PC-9 (cell line): ENCODE measurements at regions of chr10 and their contacts with region 1.

Region 1: GRCh38 chr10:4241724-4242345 is 456.8 kb upstream of the KLF6 start:
- DNase-seq: peak in 1 of 2 experiments; percentile 27
- H3K4me3 ChIP-seq: no peak overlapping the region
- H3K27ac ChIP-seq: no peak overlapping the region
- H3K4me1 ChIP-seq: peaks cover 22% of the 10 kb centered on the region
- H3K27me3 ChIP-seq: no peaks in the 10 kb centered on the region
- CTCF ChIP-seq: no peak

Region 2: GRCh38 chr10:3963191-3963673 is 278.6 kb before region 1 on chr10:
- CTCF ChIA-PET with region 1: no interaction called
- POLR2A ChIA-PET with region 1: interaction called, 16 read pairs
- intact Hi-C with region 1: no loop called
- DNase-seq: peak; percentile 36 to 73
- H3K4me3 ChIP-seq: no peak overlapping the region
- H3K27ac ChIP-seq: peak overlapping the region; percentile 55
- H3K4me1 ChIP-seq: peaks cover 18% of the 10 kb centered on the region
- H3K27me3 ChIP-seq: no peaks in the 10 kb centered on the region
- CTCF ChIP-seq: no peak

Region 3: GRCh38 chr10:4303048-4303447 is 61.2 kb after region 1 on chr10:
- CTCF ChIA-PET with region 1: no interaction called
- POLR2A ChIA-PET with region 1: interaction called, 10 read pairs
- intact Hi-C with region 1: no loop called
- DNase-seq: no peak
- H3K4me3 ChIP-seq: no peak overlapping the region
- H3K27ac ChIP-seq: no peak overlapping the region
- H3K4me1 ChIP-seq: no peaks in the 10 kb centered on the region
- H3K27me3 ChIP-seq: no peaks in the 10 kb centered on the region
- CTCF ChIP-seq: no peak

Region 4: GRCh38 chr10:4541292-4541691 is 299.5 kb after region 1 on chr10:
- CTCF ChIA-PET with region 1: no interaction called
- POLR2A ChIA-PET with region 1: no interaction called
- intact Hi-C with region 1: loop called (anchors 10 kb)
- DNase-seq: peak; percentile 58 to 80
- H3K4me3 ChIP-seq: no peak overlapping the region
- H3K27ac ChIP-seq: peak overlapping the region; percentile 60
- H3K4me1 ChIP-seq: peaks cover 10% of the 10 kb centered on the region
- H3K27me3 ChIP-seq: no peaks in the 10 kb centered on the region
- CTCF ChIP-seq: no peak